B cell (primary cell): ENCODE measurements at regions of chr4 and their contacts with region 1.

Region 1: DNA sequence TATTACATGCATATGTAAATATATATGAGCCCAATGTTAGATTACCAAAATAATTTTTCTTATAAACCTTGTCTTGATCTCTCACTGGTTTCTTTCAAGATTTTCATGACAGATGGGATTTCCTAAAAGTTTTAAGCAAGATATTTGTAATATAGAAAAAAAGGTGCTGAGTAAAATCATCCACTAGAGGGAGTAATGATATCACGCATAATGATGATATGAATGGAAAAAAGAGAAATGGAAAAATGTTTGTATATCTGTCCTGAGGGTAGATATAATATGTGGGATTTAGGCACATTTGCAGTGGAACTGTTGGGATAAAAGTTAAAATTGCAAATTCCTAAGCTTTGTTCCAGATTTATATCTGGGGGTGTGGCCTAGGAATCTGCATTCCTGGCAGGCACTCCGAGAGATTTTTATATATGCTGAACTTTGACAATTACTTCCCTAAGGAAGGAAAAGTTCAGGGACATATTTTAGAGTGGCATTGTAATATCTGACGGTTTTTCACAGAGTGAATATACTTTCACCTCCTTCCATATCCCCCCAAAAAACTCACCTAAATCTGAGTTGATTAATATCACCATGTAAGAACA is 60.5 kb downstream of the TMA16 start:
- DNase-seq: peak; percentile 62
- ATAC-seq: no peak
- H3K4me3 ChIP-seq: no peak overlapping the region
- H3K4me3 Mint-ChIP-seq: no peak overlapping the region
- H3K27ac ChIP-seq: peak overlapping the region in 1 of 2 donors; percentile 91
- H3K27ac Mint-ChIP-seq: peak overlapping the region; percentile 82
- H3K4me1 ChIP-seq: peaks cover 58 to 77% of the 10 kb centered on the region in 2 donors
- H3K4me1 Mint-ChIP-seq: peaks cover 84% of the 10 kb centered on the region
- H3K27me3 ChIP-seq: no peaks in the 10 kb centered on the region
- H3K27me3 Mint-ChIP-seq: no peaks in the 10 kb centered on the region
- CTCF ChIP-seq: peak; percentile 93

Region 2: DNA sequence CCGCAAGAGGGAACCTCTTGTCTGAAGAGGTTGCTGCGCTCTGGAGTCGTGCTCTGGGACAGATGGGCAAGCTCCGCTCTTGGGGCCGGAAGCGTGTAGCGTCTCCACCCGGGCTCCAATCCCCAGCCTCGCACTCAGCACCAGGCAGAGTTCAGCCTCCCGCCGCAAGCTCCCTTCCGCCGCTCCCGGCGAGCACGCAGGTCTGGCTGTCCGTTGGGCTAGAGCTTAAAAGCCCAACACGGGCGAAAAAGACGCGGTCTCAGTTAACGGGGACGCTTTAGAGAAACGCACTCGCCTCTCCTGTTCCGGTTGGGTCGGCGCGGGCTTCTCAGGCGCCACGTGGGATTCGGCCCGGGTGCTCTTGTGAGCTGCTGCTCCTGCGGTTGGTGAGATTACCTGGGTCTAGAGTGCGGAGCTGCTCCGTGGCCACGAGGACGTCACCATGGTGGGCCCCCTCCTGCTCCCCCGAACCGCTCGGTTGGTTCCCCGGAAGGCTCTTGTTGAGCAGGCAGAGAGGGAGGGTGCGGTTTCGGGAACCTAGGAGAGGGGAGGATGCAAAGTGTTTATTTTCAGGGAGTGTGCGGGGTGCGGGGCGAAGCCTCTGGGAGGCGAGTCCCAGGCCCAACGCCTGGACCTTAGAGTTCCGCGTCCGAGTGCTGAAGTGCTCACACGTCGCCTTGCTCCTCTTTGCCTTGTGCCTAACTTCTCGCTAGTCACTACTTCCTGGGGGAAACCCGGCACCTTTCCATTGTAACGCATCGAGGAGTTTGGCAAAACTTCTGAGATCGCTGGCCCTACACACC is 60.4 kb before region 1 on chr4 and contains the start of gene TMA16:
- CTCF ChIA-PET with region 1: interaction called, 34 read pairs
- POLR2A ChIA-PET with region 1: interaction called, 8 read pairs
- intact Hi-C with region 1: no loop called
- DNase-seq: peak; percentile 90
- ATAC-seq: peak; percentile 67
- H3K4me3 ChIP-seq: peak within 1 kb of the TSS; percentile 68 to 99 (median 96)
- H3K4me3 Mint-ChIP-seq: peak within 1 kb of the TSS; percentile 99
- H3K27ac ChIP-seq: peak within 1 kb of the TSS; percentile 80 to 81
- H3K27ac Mint-ChIP-seq: peak within 1 kb of the TSS; percentile 100
- H3K4me1 ChIP-seq: peaks cover 21 to 28% of the 10 kb centered on the region in 2 donors
- H3K4me1 Mint-ChIP-seq: peaks cover 42% of the 10 kb centered on the region
- H3K27me3 ChIP-seq: no peaks in the 10 kb centered on the region
- H3K27me3 Mint-ChIP-seq: no peaks in the 10 kb centered on the region
- CTCF ChIP-seq: no peak
- total RNA-seq, gene TMA16: 40.5 and 49.0 TPM in 2 replicates

Region 3: GRCh38 chr4:163544407-163545038 is 10.4 kb before region 1 on chr4:
- CTCF ChIA-PET with region 1: interaction called, 59 read pairs
- POLR2A ChIA-PET with region 1: no interaction called
- intact Hi-C with region 1: no loop called
- DNase-seq: peak; percentile 84
- ATAC-seq: peak; percentile 88
- H3K4me3 ChIP-seq: no peak overlapping the region
- H3K4me3 Mint-ChIP-seq: no peak overlapping the region
- H3K27ac ChIP-seq: peak overlapping the region; percentile 17 to 58
- H3K27ac Mint-ChIP-seq: no peak overlapping the region
- H3K4me1 ChIP-seq: peaks cover 27 to 28% of the 10 kb centered on the region in 2 donors
- H3K4me1 Mint-ChIP-seq: peaks cover 23% of the 10 kb centered on the region
- H3K27me3 ChIP-seq: no peaks in the 10 kb centered on the region
- H3K27me3 Mint-ChIP-seq: no peaks in the 10 kb centered on the region
- CTCF ChIP-seq: peak; percentile 95

Region 4: DNA sequence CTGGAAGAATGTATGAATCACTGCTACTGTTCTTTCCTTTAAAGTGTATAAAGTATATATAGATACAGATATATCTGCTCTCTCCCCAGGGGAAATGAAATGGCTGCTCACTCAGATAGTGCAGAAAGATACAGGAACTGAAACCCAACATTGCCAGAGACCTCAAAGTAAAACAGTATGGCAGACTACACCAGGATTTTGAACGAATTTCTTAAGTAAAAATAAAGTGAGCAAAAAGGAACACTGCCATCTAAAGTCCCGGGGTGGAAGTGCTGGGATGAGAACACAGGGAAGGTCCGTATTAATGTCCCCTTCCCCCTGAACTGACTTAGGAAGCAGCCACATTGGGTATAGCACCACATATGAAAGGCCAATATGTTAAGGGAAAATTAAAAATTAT is 32.9 kb after region 1 on chr4:
- CTCF ChIA-PET with region 1: interaction called, 48 read pairs
- POLR2A ChIA-PET with region 1: interaction called, 4 read pairs
- intact Hi-C with region 1: loop called (anchors 2 kb)
- DNase-seq: peak; percentile 85
- ATAC-seq: peak; percentile 81
- H3K4me3 ChIP-seq: peak overlapping the region in 1 of 5 experiments; percentile 37
- H3K4me3 Mint-ChIP-seq: peak overlapping the region; percentile 55
- H3K27ac ChIP-seq: peak overlapping the region; percentile 35 to 56
- H3K27ac Mint-ChIP-seq: peak overlapping the region; percentile 83
- H3K4me1 ChIP-seq: peaks cover 63 to 66% of the 10 kb centered on the region in 2 donors
- H3K4me1 Mint-ChIP-seq: peaks cover 69% of the 10 kb centered on the region
- H3K27me3 ChIP-seq: no peaks in the 10 kb centered on the region
- H3K27me3 Mint-ChIP-seq: no peaks in the 10 kb centered on the region
- CTCF ChIP-seq: peak; percentile 85

Region 5: GRCh38 chr4:163611784-163612445 is 56.9 kb after region 1 on chr4:
- CTCF ChIA-PET with region 1: interaction called, 94 read pairs
- POLR2A ChIA-PET with region 1: interaction called, 13 read pairs
- intact Hi-C with region 1: loop called (anchors 2 kb)
- DNase-seq: no peak
- ATAC-seq: peak; percentile 35
- H3K4me3 ChIP-seq: peak overlapping the region; percentile 74 to 96 (median 87)
- H3K4me3 Mint-ChIP-seq: peak overlapping the region; percentile 91
- H3K27ac ChIP-seq: peak overlapping the region; percentile 80 to 88
- H3K27ac Mint-ChIP-seq: peak overlapping the region; percentile 87
- H3K4me1 ChIP-seq: peaks cover 39 to 42% of the 10 kb centered on the region in 2 donors
- H3K4me1 Mint-ChIP-seq: peaks cover 50% of the 10 kb centered on the region
- H3K27me3 ChIP-seq: no peaks in the 10 kb centered on the region
- H3K27me3 Mint-ChIP-seq: no peaks in the 10 kb centered on the region
- CTCF ChIP-seq: no peak

Region 6: GRCh38 chr4:163681208-163681821 is 126.3 kb after region 1 on chr4:
- CTCF ChIA-PET with region 1: interaction called, 1,334 read pairs
- POLR2A ChIA-PET with region 1: interaction called, 4 read pairs
- intact Hi-C with region 1: loop called (anchors 1 kb)
- DNase-seq: peak; percentile 80
- ATAC-seq: peak; percentile 85
- H3K4me3 ChIP-seq: no peak overlapping the region
- H3K4me3 Mint-ChIP-seq: no peak overlapping the region
- H3K27ac ChIP-seq: no peak overlapping the region
- H3K27ac Mint-ChIP-seq: peak overlapping the region; percentile 74
- H3K4me1 ChIP-seq: peaks cover 6 to 11% of the 10 kb centered on the region in 2 donors
- H3K4me1 Mint-ChIP-seq: peaks cover 24% of the 10 kb centered on the region
- H3K27me3 ChIP-seq: no peaks in the 10 kb centered on the region
- H3K27me3 Mint-ChIP-seq: no peaks in the 10 kb centered on the region
- CTCF ChIP-seq: peak; percentile 87

Region 7: DNA sequence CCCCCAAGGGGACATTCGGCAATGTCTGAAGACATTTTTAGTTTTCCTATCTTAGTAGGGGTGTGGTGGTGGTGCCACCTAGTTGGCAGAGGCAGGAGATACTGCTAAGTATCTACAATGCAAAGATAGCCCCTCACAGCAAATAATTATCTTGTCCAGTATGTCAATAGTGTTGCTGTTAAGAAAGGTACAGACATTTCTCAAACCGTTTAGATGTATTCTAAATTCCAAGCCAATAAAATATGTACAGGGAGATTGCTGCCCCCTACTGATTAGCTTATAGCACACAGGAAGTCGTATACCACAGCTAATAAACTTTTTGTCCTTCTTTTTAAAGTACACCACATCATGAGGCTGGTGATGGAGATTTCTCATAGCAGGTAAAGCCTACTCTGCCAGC is 200.0 kb after region 1 on chr4:
- CTCF ChIA-PET with region 1: interaction called, 225 read pairs
- POLR2A ChIA-PET with region 1: interaction called, 4 read pairs
- intact Hi-C with region 1: loop called (anchors 1 kb)
- DNase-seq: peak; percentile 56
- ATAC-seq: peak; percentile 54
- H3K4me3 ChIP-seq: peak overlapping the region in 1 of 5 experiments; percentile 8
- H3K4me3 Mint-ChIP-seq: peak overlapping the region; percentile 64
- H3K27ac ChIP-seq: no peak overlapping the region
- H3K27ac Mint-ChIP-seq: no peak overlapping the region
- H3K4me1 ChIP-seq: peaks cover 5 to 6% of the 10 kb centered on the region in 2 donors
- H3K4me1 Mint-ChIP-seq: peaks cover 5% of the 10 kb centered on the region
- H3K27me3 ChIP-seq: no peaks in the 10 kb centered on the region
- H3K27me3 Mint-ChIP-seq: no peaks in the 10 kb centered on the region
- CTCF ChIP-seq: peak; percentile 74

Region 8: GRCh38 chr4:164138521-164138920 is 583.6 kb after region 1 on chr4:
- CTCF ChIA-PET with region 1: no interaction called
- POLR2A ChIA-PET with region 1: no interaction called
- intact Hi-C with region 1: no loop called
- DNase-seq: no peak
- ATAC-seq: no peak
- H3K4me3 ChIP-seq: no peak overlapping the region
- H3K4me3 Mint-ChIP-seq: no peak overlapping the region
- H3K27ac ChIP-seq: no peak overlapping the region
- H3K27ac Mint-ChIP-seq: no peak overlapping the region
- H3K4me1 ChIP-seq: no peaks in the 10 kb centered on the region
- H3K4me1 Mint-ChIP-seq: no peaks in the 10 kb centered on the region
- H3K27me3 ChIP-seq: no peaks in the 10 kb centered on the region
- H3K27me3 Mint-ChIP-seq: no peaks in the 10 kb centered on the region
- CTCF ChIP-seq: no peak